SK-N-SH (cell line): ENCODE measurements at regions of chr6 and their contacts with region 1.

Region 1: GRCh38 chr6:52284460-52285176 is at the start of gene MCM3:
- DNase-seq: peak; percentile 95
- H3K4me3 ChIP-seq: peak within 1 kb of the TSS; percentile 88 to 89
- H3K27ac ChIP-seq: peak within 1 kb of the TSS; percentile 53 to 99
- H3K4me1 ChIP-seq: peaks cover 14 to 20% of the 10 kb centered on the region in 2 experiments; a peak in 3 of 4 replicates
- H3K27me3 ChIP-seq: no peaks in the 10 kb centered on the region
- CTCF ChIP-seq: no peak
- EP300 ChIP-seq: 0 out of 4 replicates have a peak, but pooled peaks of 1 of the 2 experiments have one; percentile 6
- RAD21 ChIP-seq: no peak
- polyA plus RNA-seq, gene MCM3: 62.4 and 71.4 TPM in 2 replicates

Region 2: DNA sequence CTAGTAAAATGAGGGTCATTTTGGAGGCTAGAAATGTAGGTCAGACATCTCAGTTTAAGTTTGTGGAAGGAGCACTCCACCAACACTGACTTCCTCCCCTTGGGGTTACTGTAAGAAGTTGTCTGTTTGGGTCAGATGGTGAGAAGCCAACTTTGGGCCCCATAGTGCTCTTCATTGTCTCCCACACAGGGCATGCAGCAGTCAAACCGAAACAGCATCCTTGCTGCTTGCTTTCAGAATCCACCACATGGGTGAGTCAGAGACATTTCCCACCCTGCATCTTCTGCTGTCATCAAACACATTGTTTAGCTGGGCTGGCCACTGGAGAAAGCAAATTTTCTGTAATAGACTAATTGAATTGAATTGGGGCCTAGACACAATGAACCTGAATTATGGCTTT is 57.1 kb before region 1 on chr6:
- CTCF ChIA-PET with region 1: no interaction called
- POLR2A ChIA-PET with region 1: no interaction called
- DNase-seq: no peak
- H3K4me3 ChIP-seq: no peak overlapping the region
- H3K27ac ChIP-seq: no peak overlapping the region
- H3K4me1 ChIP-seq: no peaks in the 10 kb centered on the region
- H3K27me3 ChIP-seq: no peaks in the 10 kb centered on the region; the same call in 1 of the 2 replicates
- CTCF ChIP-seq: no peak
- EP300 ChIP-seq: no peak
- RAD21 ChIP-seq: no peak

Region 3: GRCh38 chr6:52346503-52346902 is 61.9 kb after region 1 on chr6:
- CTCF ChIA-PET with region 1: no interaction called
- POLR2A ChIA-PET with region 1: no interaction called
- DNase-seq: no peak
- H3K4me3 ChIP-seq: no peak overlapping the region
- H3K27ac ChIP-seq: no peak overlapping the region
- H3K4me1 ChIP-seq: no peaks in the 10 kb centered on the region; a peak in 1 of 4 replicates
- H3K27me3 ChIP-seq: no peaks in the 10 kb centered on the region
- CTCF ChIP-seq: no peak
- EP300 ChIP-seq: no peak
- RAD21 ChIP-seq: no peak

Region 4: GRCh38 chr6:52361945-52362442 is 77.4 kb after region 1 on chr6 and contains the start of gene PAQR8:
- CTCF ChIA-PET with region 1: interaction called, 22 read pairs
- POLR2A ChIA-PET with region 1: interaction called, 14 read pairs
- DNase-seq: peak; percentile 97
- H3K4me3 ChIP-seq: peak within 1 kb of the TSS; percentile 93 to 97
- H3K27ac ChIP-seq: peak within 1 kb of the TSS; percentile 47 to 80; a peak in 3 of 4 replicates
- H3K4me1 ChIP-seq: peaks cover 0 to 28% of the 10 kb centered on the region in 2 experiments; a peak in 3 of 4 replicates
- H3K27me3 ChIP-seq: no peaks in the 10 kb centered on the region
- CTCF ChIP-seq: no peak
- EP300 ChIP-seq: no peak
- RAD21 ChIP-seq: no peak
- polyA plus RNA-seq, gene PAQR8: 2.3 and 2.4 TPM in 2 replicates

Region 5: DNA sequence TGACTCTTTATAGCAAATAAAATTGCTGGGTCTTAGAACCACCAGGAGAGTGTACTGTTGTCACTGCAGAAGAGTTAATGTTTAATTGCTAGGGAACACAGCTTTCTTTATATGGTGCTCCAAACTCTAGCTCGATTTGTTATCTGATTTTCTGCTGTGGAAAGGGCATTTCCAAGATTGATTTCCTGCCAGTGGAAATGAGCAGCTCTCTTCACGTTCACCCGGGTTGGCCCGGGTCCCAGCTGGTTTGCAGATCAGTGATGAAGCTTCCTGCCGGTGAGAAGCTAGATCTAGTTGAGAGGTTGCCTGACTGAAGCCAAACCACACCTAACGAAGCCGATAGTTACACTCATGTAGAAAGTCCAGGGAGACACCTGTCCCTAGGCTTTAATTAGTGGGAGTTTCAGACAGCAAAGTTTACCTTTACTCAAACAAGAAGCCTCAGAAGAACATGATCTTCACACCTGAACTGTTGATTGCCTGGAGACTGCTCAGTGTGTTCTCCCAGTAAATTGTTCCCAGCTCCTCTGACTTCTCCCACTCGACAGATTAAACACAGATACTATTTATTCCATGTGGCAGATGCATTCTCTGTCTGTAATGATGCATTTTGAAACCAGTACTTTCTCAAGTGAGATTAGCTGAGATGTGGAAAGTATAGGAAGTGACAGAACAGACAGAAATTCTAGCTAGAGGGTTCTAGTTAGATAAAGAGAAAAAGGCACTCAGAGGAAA is 105.2 kb after region 1 on chr6:
- CTCF ChIA-PET with region 1: interaction called, 33 read pairs
- POLR2A ChIA-PET with region 1: no interaction called
- DNase-seq: peak; percentile 63
- H3K4me3 ChIP-seq: peak overlapping the region; percentile 10 to 31; a peak in 3 of 4 replicates
- H3K27ac ChIP-seq: peak overlapping the region; percentile 79 to 90
- H3K4me1 ChIP-seq: peaks cover 17 to 20% of the 10 kb centered on the region in 2 experiments; a peak in 3 of 4 replicates
- H3K27me3 ChIP-seq: no peaks in the 10 kb centered on the region
- CTCF ChIP-seq: peak; percentile 42
- EP300 ChIP-seq: peak in 1 of 2 experiments; percentile 14; a peak in 1 of 4 replicates
- RAD21 ChIP-seq: peak; percentile 55

Region 6: GRCh38 chr6:52399511-52400312 is 115.1 kb after region 1 on chr6:
- CTCF ChIA-PET with region 1: interaction called, 119 read pairs
- POLR2A ChIA-PET with region 1: no interaction called
- DNase-seq: peak; percentile 70
- H3K4me3 ChIP-seq: no peak overlapping the region; a peak in 1 of 4 replicates
- H3K27ac ChIP-seq: no peak overlapping the region; a peak in 1 of 4 replicates
- H3K4me1 ChIP-seq: peaks cover 6 to 16% of the 10 kb centered on the region in 2 experiments; a peak in 2 of 4 replicates
- H3K27me3 ChIP-seq: no peaks in the 10 kb centered on the region
- CTCF ChIP-seq: peak; percentile 89
- EP300 ChIP-seq: no peak
- RAD21 ChIP-seq: peak; percentile 91